H1 (cell line): ENCODE measurements at regions of chr16 and their contacts with region 1.

Region 1: DNA sequence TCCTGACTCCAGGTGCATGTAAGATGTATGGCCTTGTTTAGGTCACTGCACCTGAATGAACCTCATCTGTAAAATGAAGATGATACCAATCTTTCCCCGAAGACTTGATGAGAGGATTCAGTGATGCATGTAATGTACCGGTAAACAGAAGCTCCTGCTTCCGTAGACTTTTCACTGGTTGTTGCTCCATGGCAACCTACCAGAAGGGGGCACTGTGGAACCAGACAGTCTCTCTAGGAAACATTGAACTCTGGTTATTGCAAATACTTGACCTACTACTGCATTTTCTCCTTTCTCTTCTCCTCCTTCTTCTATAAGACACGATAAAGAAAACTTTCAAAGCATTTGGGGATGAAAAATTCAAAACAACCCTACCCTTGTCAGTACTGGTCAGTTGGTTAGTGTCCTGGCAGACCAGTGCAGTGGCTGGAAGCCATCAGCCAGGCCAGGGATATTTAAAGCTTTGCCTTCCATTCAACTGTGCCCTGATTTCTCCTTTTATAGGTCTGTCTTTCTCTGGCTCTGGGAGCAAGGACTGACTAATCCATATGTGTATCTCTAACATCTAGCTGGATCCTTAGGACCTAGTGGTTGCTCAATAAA is 667.4 kb upstream of the SALL1 start:
- DNase-seq: peak; percentile 25 to 89
- H3K4me3 ChIP-seq: no peak overlapping the region
- H3K27ac ChIP-seq: no peak overlapping the region
- H3K4me1 ChIP-seq: no peaks in the 10 kb centered on the region
- H3K27me3 ChIP-seq: no peaks in the 10 kb centered on the region
- CTCF ChIP-seq: peak; percentile 57 to 88 (median 84)
- EP300 ChIP-seq: no peak
- POLR2A ChIP-seq: no peak
- RAD21 ChIP-seq: peak; percentile 89 to 93

Region 2: DNA sequence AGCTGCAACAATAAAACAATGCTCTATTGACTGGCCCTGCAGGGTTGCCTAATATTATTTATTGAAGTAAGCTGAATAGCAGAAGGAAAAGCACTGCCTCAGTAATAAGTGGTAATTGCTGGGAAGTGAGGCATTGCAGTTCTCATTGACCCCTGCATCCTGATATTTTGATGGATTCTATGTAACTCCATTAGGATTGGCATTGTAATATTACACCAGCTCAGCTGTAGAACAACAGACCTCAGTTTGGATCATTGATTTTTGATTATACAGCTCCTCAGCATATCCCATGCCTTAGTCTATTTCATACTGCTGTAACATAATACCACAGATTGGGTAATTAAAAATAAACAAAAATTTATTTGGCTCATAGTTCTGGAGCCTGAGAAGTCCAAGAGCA is 16.8 kb before region 1 on chr16:
- CTCF ChIA-PET with region 1: interaction called, 23 read pairs
- POLR2A ChIA-PET with region 1: no interaction called
- DNase-seq: no peak
- H3K4me3 ChIP-seq: no peak overlapping the region
- H3K27ac ChIP-seq: no peak overlapping the region
- H3K4me1 ChIP-seq: no peaks in the 10 kb centered on the region
- H3K27me3 ChIP-seq: no peaks in the 10 kb centered on the region
- CTCF ChIP-seq: no peak
- EP300 ChIP-seq: no peak
- POLR2A ChIP-seq: no peak
- RAD21 ChIP-seq: no peak

Region 3: DNA sequence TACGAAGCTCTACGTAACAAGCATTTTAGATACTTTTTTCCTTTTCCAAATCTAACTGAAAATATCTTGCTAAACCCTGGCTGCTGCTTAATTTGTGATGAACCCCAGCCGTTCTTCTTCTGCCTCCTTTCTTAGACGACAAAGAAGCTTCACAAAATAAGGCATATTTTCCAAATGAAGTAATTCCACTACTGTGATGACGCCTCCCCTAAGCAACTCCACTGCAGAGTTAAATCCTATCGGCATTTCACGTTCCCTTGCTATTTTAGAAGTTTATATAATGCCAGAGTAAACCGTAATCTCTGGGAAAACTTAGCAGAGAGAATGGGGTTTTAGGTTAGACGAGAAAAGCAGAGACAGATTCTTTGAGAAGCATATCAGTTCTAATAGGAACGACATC is 15.7 kb after region 1 on chr16:
- CTCF ChIA-PET with region 1: interaction called, 25 read pairs
- POLR2A ChIA-PET with region 1: no interaction called
- DNase-seq: no peak
- H3K4me3 ChIP-seq: no peak overlapping the region
- H3K27ac ChIP-seq: no peak overlapping the region
- H3K4me1 ChIP-seq: 0 out of 7 replicates have a peak, but pooled peaks cover 0 to 2% (median 0%) of the 10 kb centered on the region in 4 experiments
- H3K27me3 ChIP-seq: no peaks in the 10 kb centered on the region
- CTCF ChIP-seq: no peak
- EP300 ChIP-seq: no peak
- POLR2A ChIP-seq: no peak
- RAD21 ChIP-seq: no peak

Region 4: GRCh38 chr16:51851111-51851510 is 32.7 kb after region 1 on chr16:
- CTCF ChIA-PET with region 1: interaction called, 12 read pairs
- POLR2A ChIA-PET with region 1: no interaction called
- DNase-seq: no peak
- H3K4me3 ChIP-seq: no peak overlapping the region
- H3K27ac ChIP-seq: no peak overlapping the region
- H3K4me1 ChIP-seq: no peaks in the 10 kb centered on the region
- H3K27me3 ChIP-seq: no peaks in the 10 kb centered on the region
- CTCF ChIP-seq: no peak
- EP300 ChIP-seq: no peak
- POLR2A ChIP-seq: no peak
- RAD21 ChIP-seq: no peak

Region 5: DNA sequence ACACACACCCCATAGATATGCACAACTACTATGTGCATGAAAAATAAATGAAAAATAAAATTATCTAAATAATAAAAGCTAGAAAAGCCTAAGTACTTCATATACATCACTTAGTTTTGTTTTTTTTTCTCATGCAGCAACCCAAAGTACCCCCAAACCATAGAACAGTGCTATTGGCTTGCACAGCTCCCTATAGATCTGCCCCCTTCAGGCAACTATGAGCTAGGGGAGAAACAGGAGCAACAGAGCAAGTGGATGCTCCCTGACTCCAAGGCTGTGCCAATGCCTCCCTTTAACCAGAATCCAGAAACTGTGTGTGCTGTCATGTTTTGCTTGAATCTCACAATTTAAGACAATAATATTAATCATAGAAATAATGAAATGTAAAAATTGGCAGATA is 123.0 kb after region 1 on chr16:
- CTCF ChIA-PET with region 1: interaction called, 13 read pairs
- POLR2A ChIA-PET with region 1: no interaction called
- DNase-seq: no peak
- H3K4me3 ChIP-seq: no peak overlapping the region
- H3K27ac ChIP-seq: no peak overlapping the region
- H3K4me1 ChIP-seq: peaks cover 0 to 7% (median 0%) of the 10 kb centered on the region in 4 experiments; a peak in 1 of 7 replicates
- H3K27me3 ChIP-seq: no peaks in the 10 kb centered on the region
- CTCF ChIP-seq: peak; percentile 25 to 60 (median 32)
- EP300 ChIP-seq: no peak
- POLR2A ChIP-seq: no peak
- RAD21 ChIP-seq: peak in 1 of 2 experiments; percentile 28; a peak in 1 of 4 replicates

Region 6: DNA sequence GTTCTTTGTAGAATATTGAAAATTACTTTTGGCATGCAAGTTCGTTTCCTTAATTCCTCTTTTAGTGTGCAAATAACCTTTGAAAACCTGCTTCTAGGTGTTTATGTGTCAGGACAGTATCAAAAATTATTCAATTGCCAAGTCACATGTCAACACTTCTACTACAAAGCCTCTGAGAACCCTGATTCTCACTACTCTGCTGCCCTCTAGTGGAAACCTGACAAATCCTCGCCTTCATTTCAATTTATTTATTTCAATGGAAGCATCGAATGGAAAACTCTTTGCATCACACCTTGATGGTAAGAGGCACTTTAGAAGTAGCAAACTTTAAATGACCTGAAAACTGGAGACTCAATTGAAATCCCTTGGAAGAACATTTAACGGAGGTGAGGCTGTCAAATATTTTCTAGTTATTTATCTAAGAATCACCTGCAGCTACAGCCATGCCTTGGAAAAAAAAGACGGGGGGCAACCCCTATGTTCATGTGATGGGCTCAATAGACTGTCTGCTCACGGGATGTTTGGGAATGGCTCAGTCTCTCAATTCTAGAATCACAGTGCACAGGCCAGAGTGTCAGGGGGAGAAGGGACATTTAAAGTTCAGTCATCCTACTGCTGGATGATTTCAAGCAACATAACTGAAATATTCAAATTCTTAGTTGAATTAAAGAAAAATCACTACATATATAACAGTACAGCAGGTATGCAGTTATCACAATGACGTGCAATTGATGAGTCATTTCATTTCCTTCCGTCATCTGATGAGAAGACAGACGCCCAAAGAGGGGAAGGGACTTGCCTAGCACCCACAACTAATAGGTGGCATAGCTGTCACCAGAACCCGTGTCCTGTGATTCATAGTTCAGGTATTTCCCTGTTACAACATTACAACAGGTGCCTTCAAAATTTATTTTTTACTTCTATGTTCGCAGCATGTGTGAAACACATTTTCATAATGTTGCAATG is 164.6 kb after region 1 on chr16:
- CTCF ChIA-PET with region 1: interaction called, 424 read pairs
- POLR2A ChIA-PET with region 1: interaction called, 6 read pairs
- DNase-seq: peak in 1 of 2 experiments; percentile 52
- H3K4me3 ChIP-seq: no peak overlapping the region
- H3K27ac ChIP-seq: no peak overlapping the region
- H3K4me1 ChIP-seq: no peaks in the 10 kb centered on the region
- H3K27me3 ChIP-seq: no peaks in the 10 kb centered on the region
- CTCF ChIP-seq: peak in 2 of 3 experiments; percentile 72; a peak in 3 of 4 replicates
- EP300 ChIP-seq: no peak
- POLR2A ChIP-seq: no peak
- RAD21 ChIP-seq: peak; percentile 95 to 98